HepG2 (cell line): ENCODE measurements at regions of chr18 and their contacts with region 1.

Region 1: DNA sequence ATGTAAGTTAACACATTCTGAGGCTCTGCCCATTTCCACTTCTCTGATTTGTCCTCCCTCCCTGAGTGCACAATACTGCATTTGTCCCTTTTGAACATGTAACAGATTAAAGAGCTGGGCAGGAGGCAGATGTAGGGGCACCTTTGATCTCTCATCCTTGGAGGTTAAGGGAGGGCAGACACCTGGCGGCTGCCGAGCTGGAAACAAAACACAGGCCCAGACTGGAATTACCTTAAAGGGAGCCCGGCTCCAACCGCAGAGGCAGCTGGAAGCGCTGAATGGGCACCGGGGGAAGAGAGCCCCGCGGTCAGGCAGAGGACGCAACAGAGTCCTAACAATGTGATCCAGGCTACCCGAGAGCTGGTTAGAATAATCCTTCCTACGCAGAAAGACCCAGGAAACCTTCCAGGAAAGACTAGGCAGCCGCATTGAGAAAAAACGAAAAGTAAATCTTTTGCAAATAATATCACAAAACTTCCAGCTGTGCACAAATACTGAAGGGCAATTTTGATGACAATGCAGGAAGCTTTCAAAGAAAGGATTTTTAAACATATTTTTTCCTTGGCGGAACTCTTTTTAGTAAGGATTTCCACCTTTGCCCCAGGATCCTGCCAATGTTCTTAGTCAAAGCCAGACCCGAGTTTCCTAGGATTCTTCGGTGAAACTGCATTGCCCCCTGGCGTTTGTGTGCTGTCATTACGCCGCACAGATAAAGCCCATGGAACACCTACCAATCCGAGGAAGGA is 216.0 kb downstream of the TGIF1 start:
- DNase-seq: peak; percentile 99
- ATAC-seq: peak; percentile 90
- H3K4me3 ChIP-seq: peak overlapping the region; percentile 36 to 53 (median 42); a peak in 5 of 6 replicates
- H3K27ac ChIP-seq: peak overlapping the region; percentile 85
- H3K4me1 ChIP-seq: peaks cover 55% of the 10 kb centered on the region
- H3K27me3 ChIP-seq: no peaks in the 10 kb centered on the region
- CTCF ChIP-seq: peak; percentile 91
- EP300 ChIP-seq: peak; percentile 74 to 98; a peak in 3 of 4 replicates
- POLR2A ChIP-seq: peak; percentile 24 to 79; a peak in 3 of 4 replicates
- RAD21 ChIP-seq: peak; percentile 86

Region 2: GRCh38 chr18:3297025-3297984 is 368.6 kb before region 1 on chr18:
- CTCF ChIA-PET with region 1: no interaction called
- POLR2A ChIA-PET with region 1: interaction called, 25 read pairs
- in situ Hi-C with region 1: no loop called
- intact Hi-C with region 1: loop called (anchors 5 kb)
- DNase-seq: peak; percentile 91
- ATAC-seq: peak; percentile 97
- H3K4me3 ChIP-seq: peak overlapping the region; percentile 77 to 91 (median 80)
- H3K27ac ChIP-seq: peak overlapping the region; percentile 58
- H3K4me1 ChIP-seq: peaks cover 11% of the 10 kb centered on the region; the same call in 1 of the 2 replicates
- H3K27me3 ChIP-seq: no peaks in the 10 kb centered on the region; a peak in 1 of 5 replicates
- CTCF ChIP-seq: peak; percentile 97
- EP300 ChIP-seq: peak in 1 of 2 experiments; percentile 52; a peak in 2 of 4 replicates
- POLR2A ChIP-seq: peak; percentile 76 to 89
- RAD21 ChIP-seq: peak; percentile 25

Region 3: GRCh38 chr18:3454365-3455089 is 211.4 kb before region 1 on chr18:
- CTCF ChIA-PET with region 1: no interaction called
- POLR2A ChIA-PET with region 1: interaction called, 53 read pairs
- in situ Hi-C with region 1: loop called (anchors 5 kb)
- intact Hi-C with region 1: loop called (anchors 1 kb)
- DNase-seq: peak; percentile 66
- ATAC-seq: no peak
- H3K4me3 ChIP-seq: peak overlapping the region; percentile 82 to 93 (median 93); a peak in 5 of 6 replicates
- H3K27ac ChIP-seq: peak overlapping the region; percentile 90
- H3K4me1 ChIP-seq: peaks cover 49% of the 10 kb centered on the region
- H3K27me3 ChIP-seq: no peaks in the 10 kb centered on the region; a peak in 1 of 5 replicates
- CTCF ChIP-seq: peak; percentile 67
- EP300 ChIP-seq: no peak
- POLR2A ChIP-seq: peak in 1 of 2 experiments; percentile 57; a peak in 2 of 4 replicates
- RAD21 ChIP-seq: peak; percentile 32; the same call in 1 of the 2 replicates

Region 4: GRCh38 chr18:3604498-3605408 is 61.2 kb before region 1 on chr18:
- CTCF ChIA-PET with region 1: interaction called, 3 read pairs
- POLR2A ChIA-PET with region 1: interaction called, 271 read pairs
- in situ Hi-C with region 1: no loop called
- intact Hi-C with region 1: loop called (anchors 2 kb)
- DNase-seq: peak; percentile 93
- ATAC-seq: peak; percentile 78
- H3K4me3 ChIP-seq: peak overlapping the region; percentile 42 to 45 (median 45); a peak in 5 of 6 replicates
- H3K27ac ChIP-seq: peak overlapping the region; percentile 93
- H3K4me1 ChIP-seq: peaks cover 75% of the 10 kb centered on the region
- H3K27me3 ChIP-seq: no peaks in the 10 kb centered on the region
- CTCF ChIP-seq: no peak
- EP300 ChIP-seq: peak in 1 of 2 experiments; percentile 77; a peak in 1 of 4 replicates
- POLR2A ChIP-seq: peak in 1 of 2 experiments; percentile 35; a peak in 1 of 4 replicates
- RAD21 ChIP-seq: no peak

Region 5: GRCh38 chr18:3652380-3653262 is 13.3 kb before region 1 on chr18:
- CTCF ChIA-PET with region 1: no interaction called
- POLR2A ChIA-PET with region 1: interaction called, 36 read pairs
- in situ Hi-C with region 1: no loop called
- intact Hi-C with region 1: loop called (anchors 2 kb)
- DNase-seq: peak; percentile 96
- ATAC-seq: peak; percentile 83
- H3K4me3 ChIP-seq: 0 out of 6 replicates have a peak overlapping the region, but pooled peaks of 1 of the 3 experiments have one; percentile 7
- H3K27ac ChIP-seq: peak overlapping the region; percentile 67
- H3K4me1 ChIP-seq: peaks cover 88% of the 10 kb centered on the region
- H3K27me3 ChIP-seq: no peaks in the 10 kb centered on the region
- CTCF ChIP-seq: no peak
- EP300 ChIP-seq: peak in 1 of 2 experiments; percentile 86; a peak in 2 of 4 replicates
- POLR2A ChIP-seq: peak; percentile 49 to 78; a peak in 3 of 4 replicates
- RAD21 ChIP-seq: peak; percentile 19; the same call in 1 of the 2 replicates

Region 6: GRCh38 chr18:4672152-4672551 is 1006.2 kb after region 1 on chr18:
- CTCF ChIA-PET with region 1: no interaction called
- POLR2A ChIA-PET with region 1: no interaction called
- in situ Hi-C with region 1: no loop called
- intact Hi-C with region 1: no loop called
- DNase-seq: no peak
- ATAC-seq: no peak
- H3K4me3 ChIP-seq: no peak overlapping the region
- H3K27ac ChIP-seq: no peak overlapping the region
- H3K4me1 ChIP-seq: no peaks in the 10 kb centered on the region
- H3K27me3 ChIP-seq: no peaks in the 10 kb centered on the region
- CTCF ChIP-seq: no peak
- EP300 ChIP-seq: no peak
- POLR2A ChIP-seq: no peak
- RAD21 ChIP-seq: no peak